Natural killer cell (primary cell): ENCODE measurements at regions of chr9 and their contacts with region 1.

Region 1: DNA sequence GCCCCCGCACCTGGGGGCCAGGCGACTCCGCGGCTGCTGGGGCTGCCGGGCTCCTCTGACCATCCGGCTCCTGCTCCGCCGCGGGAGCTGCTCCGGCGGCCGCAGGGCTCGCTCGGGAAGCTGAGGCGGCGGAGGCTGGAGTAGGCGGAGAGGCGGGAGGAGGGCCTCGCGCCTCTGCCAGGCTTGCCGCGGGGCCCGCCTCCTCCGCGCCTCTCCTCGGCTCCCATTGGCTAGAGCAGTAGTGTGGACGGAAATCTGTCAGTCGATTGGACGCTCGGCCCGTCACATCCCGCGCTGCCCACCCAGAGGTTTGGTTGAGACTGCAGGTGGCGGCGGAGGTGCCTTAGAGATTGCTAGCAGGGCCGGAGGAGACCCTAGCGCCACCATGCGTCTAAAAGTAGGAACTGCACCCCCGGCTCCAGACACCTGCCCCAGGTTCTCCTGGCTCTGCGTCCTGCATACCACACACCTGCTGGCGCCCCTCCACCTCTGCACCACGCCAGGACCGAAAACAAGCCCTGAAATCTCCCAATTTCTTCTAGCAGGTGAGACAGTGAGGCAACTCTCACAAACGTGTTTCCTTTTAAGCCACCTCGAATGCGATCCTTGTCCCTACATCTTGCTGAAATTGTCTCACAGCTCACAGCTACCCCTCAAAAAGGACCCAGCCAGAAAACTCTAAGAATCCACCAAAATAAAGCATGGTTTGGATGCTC is at the start of gene SCAI:
- DNase-seq: peak; percentile 95 to 99
- ATAC-seq: peak; percentile 98 to 100 (median 99)
- H3K4me3 ChIP-seq: peak within 1 kb of the TSS; percentile 33
- H3K4me3 Mint-ChIP-seq: peak within 1 kb of the TSS; percentile 98
- H3K27ac ChIP-seq: no peak within 1 kb of the TSS
- H3K27ac Mint-ChIP-seq: peak within 1 kb of the TSS; percentile 82 to 91
- H3K4me1 ChIP-seq: peaks cover 9% of the 10 kb centered on the region
- H3K4me1 Mint-ChIP-seq: peaks cover 21 to 23% of the 10 kb centered on the region in 2 donors
- H3K27me3 ChIP-seq: no peaks in the 10 kb centered on the region
- H3K27me3 Mint-ChIP-seq: no peaks in the 10 kb centered on the region
- CTCF ChIP-seq: peak; percentile 99
- total RNA-seq, gene SCAI: 8.5 to 13.0 (median 10.7) TPM

Region 2: DNA sequence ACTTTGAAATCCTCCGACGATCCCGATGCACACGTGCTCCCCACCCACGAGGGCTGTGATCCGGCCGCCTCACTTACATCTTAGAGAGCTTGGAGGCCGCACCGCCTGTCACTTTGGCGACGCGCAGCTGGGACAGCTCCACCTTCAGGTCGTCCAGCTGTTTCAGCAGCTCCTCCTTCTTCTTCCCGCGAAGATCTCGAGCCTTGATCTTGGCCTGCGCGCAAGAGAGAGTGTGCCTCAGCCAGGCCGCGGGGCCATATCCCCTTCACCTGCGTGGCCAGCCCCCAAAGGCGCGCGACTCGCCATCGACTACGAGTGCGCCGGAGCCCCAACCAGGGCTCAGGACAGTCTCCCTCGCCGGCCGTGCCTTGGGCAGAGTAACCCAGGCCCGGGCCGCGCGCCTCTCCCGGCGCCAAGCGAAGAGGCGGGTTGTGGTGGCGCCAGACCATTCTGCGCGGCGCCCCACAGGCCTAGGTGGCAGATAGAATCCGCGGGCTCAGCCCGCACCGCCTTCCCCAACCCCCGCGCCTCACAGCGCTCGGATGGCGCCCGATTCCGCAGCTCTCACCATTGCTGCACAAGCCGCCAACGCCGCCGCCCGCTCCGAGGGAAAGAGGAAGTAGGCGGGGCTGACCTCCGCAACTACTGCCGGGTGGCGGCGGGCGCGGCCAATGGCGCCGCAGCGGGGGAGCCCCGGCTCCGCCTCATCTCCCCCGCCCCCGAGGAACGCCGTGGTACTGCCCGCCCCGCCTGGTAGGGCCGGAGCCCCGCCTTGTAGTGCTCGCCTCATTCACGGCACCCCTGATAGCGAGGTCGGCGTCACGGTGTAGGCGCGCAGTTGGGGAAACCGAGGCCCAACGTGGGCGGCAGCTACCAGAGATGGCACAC is 281.9 kb before region 1 on chr9 and contains the starts of genes ARPC5L and RPL35:
- intact Hi-C with region 1: loop called (anchors 10 kb)
- DNase-seq: peak; percentile 94 to 97
- ATAC-seq: peak; percentile 96 to 99 (median 96)
- H3K4me3 ChIP-seq: peak within 1 kb of the TSS; percentile 72
- H3K4me3 Mint-ChIP-seq: peak within 1 kb of the TSS; percentile 94
- H3K27ac ChIP-seq: peak within 1 kb of the TSS; percentile 87
- H3K27ac Mint-ChIP-seq: peak within 1 kb of the TSS; percentile 92 to 93
- H3K4me1 ChIP-seq: peaks cover 29% of the 10 kb centered on the region
- H3K4me1 Mint-ChIP-seq: peaks cover 27 to 41% of the 10 kb centered on the region in 2 donors
- H3K27me3 ChIP-seq: no peaks in the 10 kb centered on the region
- H3K27me3 Mint-ChIP-seq: no peaks in the 10 kb centered on the region
- CTCF ChIP-seq: peak; percentile 22
- total RNA-seq, gene ARPC5L: 131 to 169 (median 139) TPM
- total RNA-seq, gene RPL35: 716 to 896 (median 795) TPM

Region 3: GRCh38 chr9:124940693-124941453 is 202.7 kb before region 1 on chr9 and contains the start of gene GOLGA1:
- intact Hi-C with region 1: loop called (anchors 1 kb)
- DNase-seq: peak; percentile 92 to 97
- ATAC-seq: peak; percentile 85 to 97 (median 88)
- H3K4me3 ChIP-seq: peak within 1 kb of the TSS; percentile 98
- H3K4me3 Mint-ChIP-seq: peak within 1 kb of the TSS; percentile 97
- H3K27ac ChIP-seq: peak within 1 kb of the TSS; percentile 98
- H3K27ac Mint-ChIP-seq: peak within 1 kb of the TSS; percentile 91 to 95
- H3K4me1 ChIP-seq: peaks cover 14% of the 10 kb centered on the region
- H3K4me1 Mint-ChIP-seq: peaks cover 22 to 24% of the 10 kb centered on the region in 2 donors
- H3K27me3 ChIP-seq: no peaks in the 10 kb centered on the region
- H3K27me3 Mint-ChIP-seq: no peaks in the 10 kb centered on the region
- CTCF ChIP-seq: no peak
- total RNA-seq, gene GOLGA1: 21.5 to 32.4 (median 27.0) TPM

Region 4: GRCh38 chr9:125126019-125126746 is 17.4 kb before region 1 on chr9:
- intact Hi-C with region 1: loop called (anchors 1 kb)
- DNase-seq: peak; percentile 75 to 93
- ATAC-seq: peak; percentile 96 to 100 (median 97)
- H3K4me3 ChIP-seq: no peak overlapping the region
- H3K4me3 Mint-ChIP-seq: peak overlapping the region; percentile 83
- H3K27ac ChIP-seq: peak overlapping the region; percentile 57
- H3K27ac Mint-ChIP-seq: peak overlapping the region; percentile 87 to 98
- H3K4me1 ChIP-seq: peaks cover 23% of the 10 kb centered on the region
- H3K4me1 Mint-ChIP-seq: peaks cover 18 to 20% of the 10 kb centered on the region in 2 donors
- H3K27me3 ChIP-seq: no peaks in the 10 kb centered on the region
- H3K27me3 Mint-ChIP-seq: no peaks in the 10 kb centered on the region
- CTCF ChIP-seq: no peak